ENCODE measurements at regions of chr19 and their contacts with region 1.

Region 1: DNA sequence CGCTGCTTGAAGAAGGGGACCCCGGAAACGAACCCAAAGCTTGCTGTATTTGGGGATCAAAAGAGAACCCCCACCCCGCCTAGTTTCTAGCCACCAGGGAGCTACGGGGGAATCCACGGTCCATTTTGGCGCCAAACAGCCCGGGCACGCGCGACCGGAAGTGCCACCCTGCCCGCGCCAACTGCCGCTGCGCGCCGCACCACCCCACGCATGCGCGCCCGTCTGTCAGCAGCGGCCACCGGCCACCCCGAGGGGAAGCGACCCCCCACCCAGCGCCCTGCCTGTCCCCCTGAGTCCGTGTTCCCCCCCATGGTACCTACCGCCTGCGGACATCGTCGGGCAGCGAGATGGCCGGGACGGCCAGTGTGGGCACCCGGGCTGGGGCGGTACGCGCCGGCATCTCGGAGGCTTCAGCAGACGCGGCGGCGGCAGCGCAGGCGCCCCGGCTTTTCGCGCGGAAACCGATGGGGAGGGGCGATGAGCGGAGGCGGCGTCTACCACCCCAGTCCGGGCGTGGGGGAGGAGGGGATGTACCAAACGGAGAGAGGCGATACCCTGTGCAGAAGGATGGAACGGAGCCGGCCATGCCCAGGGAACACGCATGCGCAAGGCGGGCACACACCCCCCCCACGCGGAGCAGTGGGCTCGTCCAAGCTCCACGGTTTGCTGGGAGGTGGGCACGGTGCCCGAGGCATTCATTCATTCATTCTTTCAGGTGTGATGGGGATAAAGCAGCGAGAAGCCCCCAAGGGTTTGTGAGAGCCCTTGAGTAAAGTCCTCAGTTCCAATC is at the start of gene DNMT1:
- DNase-seq: peak; percentile 96
- H3K4me3 Mint-ChIP-seq: peak within 1 kb of the TSS; percentile 92
- H3K27ac Mint-ChIP-seq: peak within 1 kb of the TSS; percentile 57
- H3K4me1 Mint-ChIP-seq: no peaks in the 10 kb centered on the region
- H3K27me3 Mint-ChIP-seq: no peaks in the 10 kb centered on the region
- CTCF ChIP-seq: no peak
- total RNA-seq, gene DNMT1: 47.7 and 76.4 TPM in 2 replicates

Region 2: DNA sequence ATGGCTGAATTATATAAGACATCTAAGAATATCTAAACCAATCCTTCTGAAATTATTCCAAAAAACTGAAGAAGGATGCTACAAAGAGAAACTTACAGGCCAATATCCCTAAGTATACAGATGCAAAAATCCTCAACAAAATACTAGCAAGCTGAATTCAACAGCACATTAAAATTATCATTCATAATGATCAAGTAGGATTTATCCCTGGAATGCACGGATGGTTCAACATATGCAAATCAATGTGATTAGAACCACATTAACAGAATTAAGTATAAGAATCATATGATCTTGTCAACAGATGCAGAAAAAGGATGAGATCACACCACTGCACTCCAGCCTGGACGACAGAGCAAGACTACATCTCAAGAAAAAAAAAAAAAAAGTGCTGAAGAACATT is 709.6 kb before region 1 on chr19:
- CTCF ChIA-PET with region 1: no interaction called
- POLR2A ChIA-PET with region 1: no interaction called
- intact Hi-C with region 1: no loop called
- DNase-seq: no peak
- H3K4me3 Mint-ChIP-seq: no peak overlapping the region
- H3K27ac Mint-ChIP-seq: no peak overlapping the region
- H3K4me1 Mint-ChIP-seq: no peaks in the 10 kb centered on the region
- H3K27me3 Mint-ChIP-seq: no peaks in the 10 kb centered on the region
- CTCF ChIP-seq: no peak

Region 3: GRCh38 chr19:10230861-10231611 is 36.3 kb after region 1 on chr19 and contains the start of gene S1PR2:
- CTCF ChIA-PET with region 1: no interaction called
- POLR2A ChIA-PET with region 1: interaction called, 5 read pairs
- intact Hi-C with region 1: loop called (anchors 1 kb)
- DNase-seq: peak; percentile 49
- H3K4me3 Mint-ChIP-seq: peak within 1 kb of the TSS; percentile 74
- H3K27ac Mint-ChIP-seq: no peak within 1 kb of the TSS
- H3K4me1 Mint-ChIP-seq: no peaks in the 10 kb centered on the region
- H3K27me3 Mint-ChIP-seq: no peaks in the 10 kb centered on the region
- CTCF ChIP-seq: no peak
- total RNA-seq, gene S1PR2: 0.64 and 0.89 TPM in 2 replicates

Measured in MCF 10A (cell line).